Activated CD4-positive, alpha-beta T cell treated with anti-CD3 and anti-CD28 coated beads, Interleukin-2, amount 10 ng/mL, durations not matched to agents 24 days and 14 days (primary cell): ENCODE measurements at regions of chr13 and their contacts with region 1.

Region 1: GRCh38 chr13:40666045-40666904 is at the start of gene FOXO1:
- DNase-seq: peak; percentile 97
- H3K4me3 Mint-ChIP-seq: peak within 1 kb of the TSS; percentile 93
- H3K27ac Mint-ChIP-seq: peak within 1 kb of the TSS; percentile 95
- H3K4me1 Mint-ChIP-seq: peaks cover 35% of the 10 kb centered on the region
- H3K27me3 Mint-ChIP-seq: no peaks in the 10 kb centered on the region
- total RNA-seq, gene FOXO1: 38.1 and 39.6 TPM in 2 replicates

Region 2: DNA sequence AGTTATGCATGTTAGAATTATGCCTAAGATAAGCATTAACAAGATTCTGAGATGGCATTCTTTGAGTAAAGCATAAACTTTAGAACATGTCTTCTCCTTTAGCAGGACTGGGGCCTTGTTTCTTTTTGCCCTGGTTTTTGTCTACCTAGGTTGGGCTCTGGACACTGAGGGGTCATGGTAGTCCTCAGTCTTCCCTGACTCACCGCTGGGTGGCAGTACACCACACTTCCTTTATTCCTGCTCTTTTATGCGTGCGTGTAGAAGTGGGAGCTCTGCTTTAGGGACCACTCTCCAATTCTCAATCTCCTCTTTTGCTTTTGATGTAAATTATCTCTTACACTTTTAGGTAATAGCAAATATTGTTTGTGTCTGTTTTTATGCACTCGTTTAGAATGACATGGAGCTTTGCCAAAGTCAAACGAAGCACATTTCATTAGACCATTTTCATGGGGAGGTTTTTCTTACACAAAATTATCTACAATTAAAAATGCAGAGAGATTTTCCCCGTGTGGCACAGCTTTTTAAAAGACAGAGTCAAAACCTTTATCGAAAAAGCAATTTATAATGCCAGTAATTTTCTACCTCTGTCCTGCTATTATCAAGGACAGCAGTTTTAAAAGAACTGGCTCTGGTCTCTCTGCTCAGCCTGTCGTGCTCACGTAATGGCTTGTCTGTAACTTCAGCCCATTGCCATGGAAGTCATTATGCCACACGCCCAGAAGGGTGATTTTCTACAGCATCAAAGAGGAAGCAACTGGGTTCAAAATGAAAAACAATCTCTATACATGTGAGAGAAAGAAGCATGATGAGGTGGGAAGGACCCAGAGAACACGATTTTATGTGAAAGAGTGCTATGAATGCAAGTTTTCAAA is 596.9 kb before region 1 on chr13:
- intact Hi-C with region 1: loop called (anchors 2 kb)
- DNase-seq: peak; percentile 90
- H3K4me3 Mint-ChIP-seq: no peak overlapping the region
- H3K27ac Mint-ChIP-seq: no peak overlapping the region
- H3K4me1 Mint-ChIP-seq: peaks cover 25% of the 10 kb centered on the region
- H3K27me3 Mint-ChIP-seq: no peaks in the 10 kb centered on the region

Region 3: GRCh38 chr13:40221460-40222201 is 444.6 kb before region 1 on chr13:
- intact Hi-C with region 1: loop called (anchors 5 kb)
- DNase-seq: peak; percentile 74
- H3K4me3 Mint-ChIP-seq: peak overlapping the region; percentile 49
- H3K27ac Mint-ChIP-seq: peak overlapping the region; percentile 45
- H3K4me1 Mint-ChIP-seq: peaks cover 36% of the 10 kb centered on the region
- H3K27me3 Mint-ChIP-seq: no peaks in the 10 kb centered on the region

Region 4: DNA sequence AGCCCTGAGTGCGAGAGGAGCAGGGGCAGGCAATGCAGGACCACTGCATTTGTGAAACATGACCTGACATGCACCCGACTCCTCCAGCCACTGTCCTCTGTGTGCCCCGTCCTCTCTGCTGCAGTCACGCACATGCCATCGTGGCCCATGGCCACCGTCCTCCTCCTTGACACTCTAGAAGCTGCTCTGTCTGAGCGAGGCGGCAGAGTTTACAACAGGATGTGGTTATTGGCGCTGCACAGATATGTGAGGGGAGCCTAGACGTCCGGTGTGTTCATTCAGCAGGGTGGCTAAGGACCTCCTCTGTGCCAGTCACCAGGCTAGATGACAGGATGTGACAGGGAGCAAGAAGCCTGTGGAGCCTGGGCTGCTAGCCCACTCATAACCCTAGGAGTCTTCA is 277.7 kb before region 1 on chr13:
- intact Hi-C with region 1: loop called (anchors 2 kb)
- DNase-seq: peak; percentile 95
- H3K4me3 Mint-ChIP-seq: peak overlapping the region; percentile 87
- H3K27ac Mint-ChIP-seq: peak overlapping the region; percentile 97
- H3K4me1 Mint-ChIP-seq: peaks cover 38% of the 10 kb centered on the region
- H3K27me3 Mint-ChIP-seq: no peaks in the 10 kb centered on the region

Region 5: GRCh38 chr13:40613192-40613818 is 53.0 kb before region 1 on chr13:
- intact Hi-C with region 1: loop called (anchors 1 kb)
- DNase-seq: peak; percentile 88
- H3K4me3 Mint-ChIP-seq: peak overlapping the region; percentile 89
- H3K27ac Mint-ChIP-seq: peak overlapping the region; percentile 97
- H3K4me1 Mint-ChIP-seq: peaks cover 73% of the 10 kb centered on the region
- H3K27me3 Mint-ChIP-seq: no peaks in the 10 kb centered on the region

Region 6: GRCh38 chr13:40982772-40983171 is 316.5 kb after region 1 on chr13:
- intact Hi-C with region 1: loop called (anchors 10 kb)
- DNase-seq: peak; percentile 90
- H3K4me3 Mint-ChIP-seq: peak overlapping the region; percentile 76
- H3K27ac Mint-ChIP-seq: peak overlapping the region; percentile 91
- H3K4me1 Mint-ChIP-seq: peaks cover 56% of the 10 kb centered on the region
- H3K27me3 Mint-ChIP-seq: no peaks in the 10 kb centered on the region